Endothelial cell of umbilical vein (primary cell): ENCODE measurements at regions of chr5 and their contacts with region 1.

Region 1: DNA sequence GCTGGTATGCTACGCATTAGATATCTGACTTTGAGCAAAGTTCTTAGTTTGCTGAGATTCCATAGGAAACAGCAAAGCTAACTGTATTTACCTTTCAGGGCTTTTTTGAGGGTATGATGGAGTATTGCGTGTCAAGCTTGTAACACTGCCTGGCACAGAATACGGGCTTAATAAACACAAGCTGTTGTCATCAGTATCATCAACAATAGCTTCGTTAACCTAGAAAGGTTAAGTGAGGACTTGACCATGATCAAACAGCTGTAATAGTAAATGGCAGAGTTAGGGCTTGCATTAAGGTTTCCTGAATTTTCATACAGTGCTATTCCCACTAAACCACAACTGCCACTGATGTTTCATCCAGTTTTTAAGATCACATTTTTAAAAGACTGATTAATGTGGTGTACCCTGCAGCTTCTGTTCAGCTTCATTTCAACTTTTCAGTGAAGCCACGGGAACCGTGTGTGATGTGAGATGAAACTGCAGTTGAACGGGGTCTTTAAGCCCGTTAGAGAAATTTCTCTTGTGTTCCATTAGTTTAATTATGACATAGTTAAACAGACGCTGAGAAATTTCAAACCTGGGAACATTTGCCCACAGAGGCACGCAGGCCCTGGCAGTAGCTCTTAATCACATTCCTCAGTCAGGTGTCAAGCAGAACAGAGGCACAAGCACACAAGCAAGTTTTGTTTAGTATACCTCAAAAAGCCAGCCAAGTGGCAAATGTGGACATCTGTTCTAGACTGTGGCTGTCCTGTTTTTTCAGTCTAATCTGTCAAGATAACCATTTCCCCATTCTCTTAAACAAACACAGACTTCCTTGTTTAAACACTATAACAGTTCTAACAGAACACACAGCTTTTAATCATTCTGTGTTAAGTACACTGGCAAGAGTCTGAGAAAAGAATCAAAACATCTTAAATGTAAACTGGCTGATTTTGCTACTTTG is 147.1 kb downstream of the ZNF608 start:
- DNase-seq: peak; percentile 98
- H3K4me3 ChIP-seq: peak overlapping the region in 1 of 3 experiments; percentile 41
- H3K27ac ChIP-seq: peak overlapping the region; percentile 99
- H3K4me1 ChIP-seq: peaks cover 63% of the 10 kb centered on the region
- H3K27me3 ChIP-seq: no peaks in the 10 kb centered on the region
- CTCF ChIP-seq: no peak
- POLR2A ChIP-seq: peak; percentile 78

Region 2: GRCh38 chr5:123700398-123701287 is 898.7 kb before region 1 on chr5:
- CTCF ChIA-PET with region 1: no interaction called
- POLR2A ChIA-PET with region 1: no interaction called
- dilution Hi-C with region 1: no loop called
- intact Hi-C with region 1: loop called (anchors 1 kb)
- DNase-seq: peak; percentile 99
- H3K4me3 ChIP-seq: no peak overlapping the region
- H3K27ac ChIP-seq: peak overlapping the region; percentile 93
- H3K4me1 ChIP-seq: peaks cover 21% of the 10 kb centered on the region
- H3K27me3 ChIP-seq: no peaks in the 10 kb centered on the region
- CTCF ChIP-seq: no peak
- POLR2A ChIP-seq: peak; percentile 27

Region 3: GRCh38 chr5:123937230-123937629 is 662.1 kb before region 1 on chr5:
- CTCF ChIA-PET with region 1: no interaction called
- POLR2A ChIA-PET with region 1: no interaction called
- dilution Hi-C with region 1: no loop called
- intact Hi-C with region 1: loop called (anchors 5 kb)
- DNase-seq: peak; percentile 68
- H3K4me3 ChIP-seq: no peak overlapping the region
- H3K27ac ChIP-seq: no peak overlapping the region
- H3K4me1 ChIP-seq: no peaks in the 10 kb centered on the region
- H3K27me3 ChIP-seq: no peaks in the 10 kb centered on the region
- CTCF ChIP-seq: peak; percentile 51 to 62
- POLR2A ChIP-seq: no peak

Region 4: GRCh38 chr5:124383693-124384092 is 215.6 kb before region 1 on chr5:
- CTCF ChIA-PET with region 1: no interaction called
- POLR2A ChIA-PET with region 1: no interaction called
- dilution Hi-C with region 1: no loop called
- intact Hi-C with region 1: no loop called
- DNase-seq: no peak
- H3K4me3 ChIP-seq: no peak overlapping the region
- H3K27ac ChIP-seq: no peak overlapping the region
- H3K4me1 ChIP-seq: no peaks in the 10 kb centered on the region
- H3K27me3 ChIP-seq: no peaks in the 10 kb centered on the region
- CTCF ChIP-seq: no peak
- POLR2A ChIP-seq: no peak

Region 5: DNA sequence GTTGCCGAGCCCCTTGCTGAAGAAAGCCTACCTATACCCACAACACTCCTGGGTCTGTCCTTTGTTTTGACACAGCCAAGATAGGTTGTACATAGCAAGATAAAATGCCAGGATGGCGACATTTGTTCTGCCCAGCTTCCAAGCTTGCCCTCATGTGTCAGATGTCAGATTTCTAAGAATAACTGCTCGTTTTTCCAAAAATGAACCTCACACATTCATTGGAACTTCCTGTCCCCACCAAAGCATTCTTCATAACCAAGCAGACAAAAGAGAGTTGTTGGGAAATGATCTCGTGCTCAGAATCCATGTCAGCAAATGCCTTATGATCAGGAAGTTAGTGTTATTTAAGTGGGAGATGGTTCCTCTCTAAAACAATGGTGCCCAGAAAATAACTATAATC is 63.0 kb before region 1 on chr5:
- CTCF ChIA-PET with region 1: no interaction called
- POLR2A ChIA-PET with region 1: no interaction called
- dilution Hi-C with region 1: no loop called
- intact Hi-C with region 1: loop called (anchors 1 kb)
- DNase-seq: peak; percentile 91
- H3K4me3 ChIP-seq: no peak overlapping the region
- H3K27ac ChIP-seq: peak overlapping the region; percentile 63
- H3K4me1 ChIP-seq: peaks cover 28% of the 10 kb centered on the region
- H3K27me3 ChIP-seq: no peaks in the 10 kb centered on the region
- CTCF ChIP-seq: no peak
- POLR2A ChIP-seq: no peak

Region 6: DNA sequence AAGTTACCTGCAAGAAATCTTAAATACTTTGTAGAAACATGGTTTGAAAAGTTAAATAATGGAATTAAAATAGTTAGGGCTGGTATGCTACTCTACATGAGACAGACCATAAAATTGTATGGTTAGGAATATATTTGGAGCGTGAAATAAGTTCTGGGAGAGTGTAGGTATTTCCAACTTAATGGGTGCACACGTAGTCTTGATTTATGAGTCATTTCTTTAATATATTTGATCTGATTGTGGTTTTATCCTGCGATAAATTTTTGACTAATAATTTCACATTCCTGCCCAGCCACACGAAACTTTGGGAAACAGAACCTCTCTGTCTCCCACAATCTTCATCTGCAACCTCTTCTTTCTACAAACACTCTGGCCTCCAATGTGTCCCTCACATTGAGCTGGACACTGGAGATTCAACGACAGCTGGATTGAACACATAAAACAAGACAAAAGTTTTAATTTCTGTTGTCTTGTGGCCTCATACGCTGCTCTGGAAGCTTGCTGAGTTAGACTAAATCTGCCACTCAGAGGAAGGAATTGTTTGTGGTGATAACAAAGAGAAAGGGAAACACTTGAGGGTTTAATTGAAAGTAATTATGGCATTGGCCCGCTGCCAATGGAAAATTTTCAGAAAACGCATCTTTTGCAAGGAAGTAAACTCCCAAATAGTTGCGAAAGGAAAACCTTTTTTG is 348.9 kb after region 1 on chr5:
- CTCF ChIA-PET with region 1: no interaction called
- POLR2A ChIA-PET with region 1: no interaction called
- dilution Hi-C with region 1: no loop called
- intact Hi-C with region 1: loop called (anchors 1 kb)
- DNase-seq: peak; percentile 90
- H3K4me3 ChIP-seq: no peak overlapping the region
- H3K27ac ChIP-seq: no peak overlapping the region
- H3K4me1 ChIP-seq: peaks cover 9% of the 10 kb centered on the region
- H3K27me3 ChIP-seq: no peaks in the 10 kb centered on the region
- CTCF ChIP-seq: no peak
- POLR2A ChIP-seq: no peak

Region 7: DNA sequence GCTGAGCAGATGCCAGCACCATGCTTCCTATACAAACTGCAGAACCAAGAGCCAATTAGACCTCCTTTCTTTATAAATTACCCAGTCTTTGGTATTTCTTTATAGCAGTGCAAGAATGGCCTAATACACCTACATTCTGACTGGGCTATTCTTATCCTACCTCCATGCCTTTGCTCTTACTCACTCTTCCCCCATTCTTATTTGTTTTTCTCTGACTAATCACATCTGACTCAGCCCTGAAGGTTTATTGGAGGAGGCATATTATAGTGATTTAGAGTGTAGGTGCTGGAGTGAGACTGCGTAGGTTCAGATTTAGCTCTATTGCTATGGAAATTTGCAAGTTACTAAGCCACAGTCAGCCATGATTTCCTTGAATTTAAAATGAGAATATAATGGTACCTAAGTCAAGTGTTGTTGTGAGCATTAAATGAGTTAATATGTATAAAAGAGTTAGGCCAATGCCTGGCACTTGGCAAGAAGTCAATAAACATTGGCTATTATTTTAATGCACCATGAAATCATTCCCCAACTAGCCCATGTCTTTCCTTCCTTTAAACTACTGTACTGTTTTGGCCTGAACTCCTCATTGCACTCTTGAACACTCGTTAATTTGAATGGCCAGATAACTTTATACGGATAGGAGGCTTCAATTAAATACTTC is 678.3 kb after region 1 on chr5:
- CTCF ChIA-PET with region 1: no interaction called
- POLR2A ChIA-PET with region 1: no interaction called
- dilution Hi-C with region 1: no loop called
- intact Hi-C with region 1: loop called (anchors 2 kb)
- DNase-seq: peak; percentile 93
- H3K4me3 ChIP-seq: no peak overlapping the region
- H3K27ac ChIP-seq: peak overlapping the region; percentile 85
- H3K4me1 ChIP-seq: peaks cover 46% of the 10 kb centered on the region
- H3K27me3 ChIP-seq: no peaks in the 10 kb centered on the region
- CTCF ChIP-seq: no peak
- POLR2A ChIP-seq: no peak